Mammary epithelial cell (primary cell): ENCODE measurements at regions of chr16 and their contacts with region 1.

Region 1: GRCh38 chr16:54140057-54140787 is 146.4 kb downstream of the IRX3 start:
- DNase-seq: no peak
- H3K4me3 ChIP-seq: no peak overlapping the region
- H3K27ac ChIP-seq: no peak overlapping the region
- H3K4me1 ChIP-seq: peaks cover 7% of the 10 kb centered on the region
- H3K27me3 ChIP-seq: no peaks in the 10 kb centered on the region
- CTCF ChIP-seq: no peak

Region 2: DNA sequence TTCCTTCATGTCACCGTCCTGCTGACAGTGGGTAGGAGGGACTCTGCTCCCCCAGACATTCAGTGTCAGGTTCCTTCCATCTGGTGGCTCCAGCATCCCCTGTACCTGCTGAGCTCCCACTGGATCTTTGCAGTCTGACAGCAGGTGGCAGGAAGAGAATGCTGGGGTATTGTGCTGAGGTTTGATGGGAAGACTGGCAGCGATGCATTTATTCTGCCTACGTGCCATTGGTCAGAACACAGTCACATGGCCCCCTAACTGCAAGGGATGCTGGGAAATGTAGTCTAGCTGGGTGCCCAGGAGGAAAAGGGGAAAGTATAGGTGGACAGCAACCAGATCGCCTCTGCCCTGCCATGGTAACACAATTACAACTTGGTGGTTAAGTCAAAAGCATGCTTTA is 102.0 kb after region 1 on chr16:
- CTCF ChIA-PET with region 1: no interaction called
- dilution Hi-C with region 1: loop called (anchors 5 kb)
- in situ Hi-C with region 1: no loop called
- intact Hi-C with region 1: no loop called
- DNase-seq: peak; percentile 33
- H3K4me3 ChIP-seq: no peak overlapping the region
- H3K27ac ChIP-seq: no peak overlapping the region
- H3K4me1 ChIP-seq: peaks cover 4% of the 10 kb centered on the region
- H3K27me3 ChIP-seq: no peaks in the 10 kb centered on the region
- CTCF ChIP-seq: peak in 1 of 2 donors; percentile 1

Region 3: GRCh38 chr16:54389836-54390494 is 249.7 kb after region 1 on chr16:
- CTCF ChIA-PET with region 1: no interaction called
- dilution Hi-C with region 1: no loop called
- in situ Hi-C with region 1: no loop called
- intact Hi-C with region 1: no loop called
- DNase-seq: no peak
- H3K4me3 ChIP-seq: no peak overlapping the region
- H3K27ac ChIP-seq: no peak overlapping the region
- H3K4me1 ChIP-seq: peaks cover 12% of the 10 kb centered on the region
- H3K27me3 ChIP-seq: no peaks in the 10 kb centered on the region
- CTCF ChIP-seq: no peak